ENCODE measurements at regions of chr16 and their contacts with region 1.

Region 1: DNA sequence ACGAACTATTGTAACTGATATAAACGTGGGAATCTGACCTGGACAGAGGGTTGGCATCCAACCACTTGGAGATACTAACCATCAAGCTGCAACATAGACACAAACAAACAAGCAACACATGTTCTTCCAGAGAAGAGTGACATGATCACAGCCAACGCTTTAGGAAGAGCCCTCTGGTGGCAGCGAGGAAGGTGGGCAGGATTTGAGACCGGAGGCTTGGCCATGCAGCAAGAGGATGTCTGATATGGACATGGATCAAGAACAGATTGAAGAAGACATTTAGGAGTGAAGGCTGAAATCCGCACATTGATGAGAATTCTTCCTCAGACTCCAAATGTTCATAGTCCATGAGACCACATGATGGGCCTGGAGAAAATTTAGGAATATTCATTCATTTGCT is 40.3 kb upstream of the TNRC6A start:
- DNase-seq: peak; percentile 57
- ATAC-seq: peak; percentile 97
- H3K4me3 ChIP-seq: no peak overlapping the region
- H3K27ac ChIP-seq: no peak overlapping the region
- H3K4me1 ChIP-seq: no peaks in the 10 kb centered on the region
- H3K27me3 ChIP-seq: no peaks in the 10 kb centered on the region
- CTCF ChIP-seq: peak; percentile 63 to 89 (median 86); a peak in 5 of 6 replicates
- POLR2A ChIP-seq: no peak
- RAD21 ChIP-seq: peak; percentile 70

Region 2: DNA sequence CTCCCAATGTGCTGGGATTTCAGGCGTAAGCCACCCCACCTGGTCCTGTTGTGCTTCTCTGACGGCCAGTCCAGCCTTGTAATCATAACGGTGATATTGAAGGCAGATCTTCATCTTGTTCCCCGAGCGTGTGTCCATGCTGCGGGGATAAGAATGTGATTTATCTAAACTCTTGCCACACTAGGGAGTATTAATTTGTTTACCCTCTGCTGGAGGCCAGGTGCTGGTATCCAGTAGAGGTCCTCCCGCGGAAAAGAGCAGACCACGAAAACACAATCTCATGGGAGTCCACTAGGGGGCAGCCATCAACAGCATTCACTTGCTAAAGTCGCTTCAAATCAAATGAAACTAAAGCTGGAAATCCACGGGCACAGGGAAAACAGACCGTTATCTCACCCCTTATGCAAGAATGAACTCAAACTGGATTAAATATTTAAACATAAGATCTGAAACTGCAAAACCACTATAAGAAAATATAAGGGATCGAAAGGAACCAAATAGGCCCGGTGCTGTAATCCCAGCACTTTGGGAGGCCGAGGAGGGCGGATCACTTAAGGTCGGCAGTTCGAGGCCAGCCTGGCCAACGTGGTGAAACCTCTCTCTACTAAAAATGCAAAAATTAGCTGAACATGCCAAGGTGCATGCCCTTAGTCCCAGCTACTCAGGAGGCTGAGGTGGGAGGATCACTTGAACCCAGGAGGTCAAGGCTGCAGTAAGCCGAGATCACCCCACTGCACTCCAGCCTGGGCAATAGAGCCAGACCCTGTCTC is 172.1 kb before region 1 on chr16:
- CTCF ChIA-PET with region 1: no interaction called
- POLR2A ChIA-PET with region 1: interaction called, 3 read pairs
- RAD21 ChIA-PET with region 1: no interaction called
- intact Hi-C with region 1: loop called (anchors 1 kb)
- DNase-seq: peak; percentile 78
- ATAC-seq: peak; percentile 95
- H3K4me3 ChIP-seq: peak overlapping the region; percentile 34
- H3K27ac ChIP-seq: no peak overlapping the region
- H3K4me1 ChIP-seq: peaks cover 0 to 6% of the 10 kb centered on the region in 2 experiments; a peak in 1 of 4 replicates
- H3K27me3 ChIP-seq: no peaks in the 10 kb centered on the region
- CTCF ChIP-seq: peak; percentile 92 to 98 (median 95)
- POLR2A ChIP-seq: no peak
- RAD21 ChIP-seq: peak; percentile 90

Region 3: DNA sequence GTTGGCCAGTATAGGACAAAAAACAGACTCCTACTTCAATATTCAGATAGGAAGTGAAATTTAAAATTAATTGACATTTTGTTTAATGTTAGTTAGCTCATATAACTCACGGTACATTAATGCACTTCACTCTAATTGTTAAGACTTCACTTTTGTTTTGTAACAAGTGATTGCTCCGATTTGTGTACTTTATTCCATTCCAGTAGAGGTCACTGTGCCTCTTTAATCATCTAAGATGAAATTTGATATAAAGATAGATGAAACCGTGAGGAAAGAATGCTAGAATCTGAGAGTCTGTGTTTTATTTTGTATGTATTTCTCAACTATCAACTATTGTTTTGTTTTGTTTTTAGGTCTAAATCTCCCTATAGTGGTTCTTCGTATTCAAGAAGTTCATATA is 120.8 kb before region 1 on chr16:
- CTCF ChIA-PET with region 1: no interaction called
- POLR2A ChIA-PET with region 1: no interaction called
- RAD21 ChIA-PET with region 1: no interaction called
- intact Hi-C with region 1: loop called (anchors 5 kb)
- DNase-seq: no peak
- ATAC-seq: no peak
- H3K4me3 ChIP-seq: no peak overlapping the region
- H3K27ac ChIP-seq: no peak overlapping the region
- H3K4me1 ChIP-seq: no peaks in the 10 kb centered on the region
- H3K27me3 ChIP-seq: no peaks in the 10 kb centered on the region
- CTCF ChIP-seq: peak in 2 of 3 experiments; percentile 28 to 61; a peak in 4 of 6 replicates
- POLR2A ChIP-seq: no peak
- RAD21 ChIP-seq: peak; percentile 48

Region 4: GRCh38 chr16:24580665-24581064 is 108.5 kb before region 1 on chr16:
- CTCF ChIA-PET with region 1: interaction called, 9 read pairs
- POLR2A ChIA-PET with region 1: no interaction called
- RAD21 ChIA-PET with region 1: interaction called in 1 of 2 experiments, 3 read pairs
- intact Hi-C with region 1: loop called (anchors 1 kb)
- DNase-seq: no peak
- ATAC-seq: no peak; the same call in 1 of the 2 replicates
- H3K4me3 ChIP-seq: no peak overlapping the region
- H3K27ac ChIP-seq: no peak overlapping the region
- H3K4me1 ChIP-seq: peaks cover 0 to 6% of the 10 kb centered on the region in 2 experiments; a peak in 2 of 4 replicates
- H3K27me3 ChIP-seq: no peaks in the 10 kb centered on the region
- CTCF ChIP-seq: peak; percentile 31 to 50 (median 47); a peak in 4 of 6 replicates
- POLR2A ChIP-seq: no peak
- RAD21 ChIP-seq: peak; percentile 69